K562 (cell line): ENCODE measurements at regions of chr6 and their contacts with region 1.

Region 1: GRCh38 chr6:20056350-20056992 is 155.8 kb downstream of the MBOAT1 start:
- DNase-seq: peak in 3 of 4 experiments; percentile 38 to 71 (median 58)
- ATAC-seq: peak; percentile 81
- H3K4me3 ChIP-seq: no peak overlapping the region
- H3K27ac ChIP-seq: no peak overlapping the region
- H3K4me1 ChIP-seq: no peaks in the 10 kb centered on the region
- H3K27me3 ChIP-seq: peaks cover 26 to 40% of the 10 kb centered on the region in 2 experiments
- CTCF ChIP-seq: peak; percentile 52 to 87 (median 67); a peak in 5 of 6 replicates
- EP300 ChIP-seq: no peak
- POLR2A ChIP-seq: no peak
- RAD21 ChIP-seq: peak; percentile 88 to 95

Region 2: DNA sequence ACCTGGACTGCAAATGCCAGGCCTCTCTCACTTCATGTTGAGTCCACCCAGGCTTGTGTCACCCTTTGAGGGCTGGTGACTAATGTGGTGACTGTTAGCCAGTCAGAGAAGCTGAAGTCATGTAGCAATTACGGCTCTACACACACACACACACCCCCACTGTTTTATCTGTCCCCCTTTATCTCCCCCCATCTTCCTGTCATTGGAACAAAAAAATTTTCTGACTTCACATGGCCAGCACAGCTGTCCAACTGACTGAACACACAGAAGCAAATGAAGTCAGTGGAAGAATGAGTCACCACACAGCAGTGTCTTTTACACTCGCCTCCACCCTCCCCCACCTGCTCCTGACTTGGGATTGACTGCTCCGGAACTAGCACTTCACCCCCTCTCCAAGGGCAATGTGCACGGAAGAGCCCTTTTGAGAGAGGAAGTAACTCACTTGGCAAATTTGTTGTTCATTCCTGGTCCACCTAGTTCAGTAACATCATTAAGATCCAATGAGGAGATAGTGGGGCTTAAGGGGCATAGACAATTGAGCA is 1471.4 kb before region 1 on chr6:
- CTCF ChIA-PET with region 1: no interaction called
- POLR2A ChIA-PET with region 1: no interaction called
- in situ Hi-C with region 1: loop called (anchors 10 kb)
- intact Hi-C with region 1: no loop called
- DNase-seq: peak; percentile 24 to 74 (median 34)
- ATAC-seq: peak; percentile 90
- H3K4me3 ChIP-seq: no peak overlapping the region
- H3K27ac ChIP-seq: peak overlapping the region; percentile 70; the same call in 2 of the 3 replicates
- H3K4me1 ChIP-seq: peaks cover 0 to 7% of the 10 kb centered on the region in 2 experiments; a peak in 2 of 5 replicates
- H3K27me3 ChIP-seq: no peaks in the 10 kb centered on the region
- CTCF ChIP-seq: no peak
- EP300 ChIP-seq: no peak
- POLR2A ChIP-seq: no peak
- RAD21 ChIP-seq: peak in 1 of 2 experiments; percentile 8; a peak in 1 of 4 replicates

Region 3: DNA sequence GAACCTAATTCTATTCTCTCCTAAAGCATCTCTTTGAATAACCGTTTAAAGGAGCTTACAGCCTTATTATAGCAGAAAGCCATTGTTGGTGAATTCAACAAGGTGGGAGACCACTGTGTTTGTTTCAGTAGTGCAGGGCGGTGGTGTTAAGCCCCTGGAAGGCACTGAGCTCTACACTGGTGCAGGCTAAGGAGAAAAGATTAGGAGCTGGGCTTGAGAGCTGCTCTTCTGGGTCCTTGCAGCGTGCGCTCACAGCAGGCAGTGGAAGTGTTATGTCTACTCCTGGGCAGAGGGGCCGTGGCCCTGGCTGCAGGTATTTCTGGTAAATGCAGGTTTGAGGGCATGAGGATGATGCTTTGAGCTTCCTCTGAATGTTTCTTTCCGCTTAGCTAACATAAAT is 1308.2 kb before region 1 on chr6:
- CTCF ChIA-PET with region 1: no interaction called
- POLR2A ChIA-PET with region 1: no interaction called
- in situ Hi-C with region 1: no loop called
- intact Hi-C with region 1: loop called (anchors 5 kb)
- DNase-seq: no peak
- ATAC-seq: no peak
- H3K4me3 ChIP-seq: no peak overlapping the region
- H3K27ac ChIP-seq: no peak overlapping the region
- H3K4me1 ChIP-seq: no peaks in the 10 kb centered on the region
- H3K27me3 ChIP-seq: no peaks in the 10 kb centered on the region
- CTCF ChIP-seq: no peak
- EP300 ChIP-seq: no peak
- POLR2A ChIP-seq: no peak
- RAD21 ChIP-seq: no peak

Region 4: DNA sequence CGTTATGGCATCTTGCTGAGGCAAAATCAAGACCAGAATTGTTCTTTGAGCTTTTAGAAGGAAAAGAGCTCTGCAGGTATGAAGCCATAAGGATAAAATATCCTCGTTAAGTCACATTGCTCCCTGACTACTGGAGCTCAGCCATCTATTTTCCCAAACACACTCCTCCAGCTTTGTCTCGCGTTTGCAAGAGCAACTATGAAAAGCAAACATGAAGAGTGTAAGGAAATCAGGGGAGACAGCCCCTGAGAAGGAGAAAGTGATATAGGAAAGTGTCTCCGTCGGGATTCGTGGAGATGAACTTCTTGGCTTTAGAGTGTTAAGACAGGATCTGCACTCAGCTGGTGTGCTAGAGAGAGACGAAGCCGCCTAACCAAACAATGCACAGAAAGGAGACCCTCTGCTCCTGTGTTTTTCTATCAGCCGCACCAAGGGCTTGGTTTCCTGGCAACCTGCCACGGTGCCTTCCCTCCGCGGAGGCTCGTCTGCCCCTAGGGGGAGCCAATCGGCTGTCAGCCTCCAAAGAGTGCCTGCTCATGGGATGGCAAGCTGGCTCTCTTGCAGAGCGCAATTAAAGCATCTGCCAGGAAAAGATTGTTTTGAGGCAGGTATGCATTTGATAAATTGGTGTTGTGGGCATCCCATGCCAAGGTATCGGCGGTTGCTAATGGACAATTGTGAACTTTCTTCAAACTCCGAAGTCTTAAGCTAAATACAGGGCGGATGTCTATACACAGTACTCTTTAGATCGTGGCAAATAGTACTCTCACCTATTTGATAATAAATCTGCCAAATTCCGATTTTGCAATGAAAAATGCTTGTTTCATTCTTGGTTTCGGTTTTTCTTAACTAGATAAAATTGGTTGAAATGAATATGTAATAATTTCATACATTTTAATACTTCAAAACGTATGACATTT is 1066.2 kb before region 1 on chr6:
- CTCF ChIA-PET with region 1: no interaction called
- POLR2A ChIA-PET with region 1: no interaction called
- in situ Hi-C with region 1: loop called (anchors 10 kb)
- intact Hi-C with region 1: loop called (anchors 5 kb)
- DNase-seq: peak; percentile 51 to 66 (median 60)
- ATAC-seq: peak; percentile 80
- H3K4me3 ChIP-seq: no peak overlapping the region
- H3K27ac ChIP-seq: no peak overlapping the region
- H3K4me1 ChIP-seq: no peaks in the 10 kb centered on the region
- H3K27me3 ChIP-seq: no peaks in the 10 kb centered on the region
- CTCF ChIP-seq: peak; percentile 40 to 68 (median 46); a peak in 5 of 6 replicates
- EP300 ChIP-seq: no peak
- POLR2A ChIP-seq: no peak
- RAD21 ChIP-seq: peak; percentile 19 to 42; a peak in 3 of 4 replicates

Region 5: GRCh38 chr6:19603721-19604120 is 452.8 kb before region 1 on chr6:
- CTCF ChIA-PET with region 1: no interaction called
- POLR2A ChIA-PET with region 1: no interaction called
- in situ Hi-C with region 1: no loop called
- intact Hi-C with region 1: no loop called
- DNase-seq: no peak
- ATAC-seq: no peak
- H3K4me3 ChIP-seq: no peak overlapping the region
- H3K27ac ChIP-seq: no peak overlapping the region
- H3K4me1 ChIP-seq: no peaks in the 10 kb centered on the region
- H3K27me3 ChIP-seq: no peaks in the 10 kb centered on the region
- CTCF ChIP-seq: no peak
- EP300 ChIP-seq: no peak
- POLR2A ChIP-seq: no peak
- RAD21 ChIP-seq: no peak

Region 6: GRCh38 chr6:19851241-19852089 is 205.0 kb before region 1 on chr6:
- CTCF ChIA-PET with region 1: no interaction called
- POLR2A ChIA-PET with region 1: no interaction called
- in situ Hi-C with region 1: no loop called
- intact Hi-C with region 1: loop called (anchors 5 kb)
- DNase-seq: peak in 2 of 4 experiments; percentile 45 to 67
- ATAC-seq: peak; percentile 95
- H3K4me3 ChIP-seq: no peak overlapping the region
- H3K27ac ChIP-seq: no peak overlapping the region
- H3K4me1 ChIP-seq: no peaks in the 10 kb centered on the region; a peak in 1 of 5 replicates
- H3K27me3 ChIP-seq: peaks cover 7 to 16% of the 10 kb centered on the region in 2 experiments; a peak in 3 of 5 replicates
- CTCF ChIP-seq: peak; percentile 63 to 89 (median 79)
- EP300 ChIP-seq: no peak
- POLR2A ChIP-seq: no peak
- RAD21 ChIP-seq: peak; percentile 72 to 86

Region 7: DNA sequence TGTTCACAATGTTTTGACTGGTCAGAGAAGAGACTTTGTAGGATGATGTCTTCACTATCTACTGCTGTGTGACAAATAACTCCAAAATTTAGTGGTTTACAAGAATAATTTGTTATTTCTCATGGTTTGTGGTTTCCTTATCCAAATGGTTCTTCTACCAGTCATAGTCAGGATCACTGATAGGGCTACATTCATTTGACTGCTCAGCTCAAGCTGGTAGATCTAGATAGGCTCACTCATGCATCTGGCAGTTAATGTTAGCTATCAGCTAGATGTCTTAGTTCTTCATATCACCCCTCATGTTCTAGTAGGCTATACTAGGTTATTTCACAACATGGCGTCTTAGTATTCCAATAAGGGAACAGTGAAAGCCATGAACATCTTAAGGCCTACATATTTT is 88.3 kb before region 1 on chr6:
- CTCF ChIA-PET with region 1: no interaction called
- POLR2A ChIA-PET with region 1: no interaction called
- in situ Hi-C with region 1: no loop called
- intact Hi-C with region 1: no loop called
- DNase-seq: peak; percentile 40 to 56 (median 50)
- ATAC-seq: peak; percentile 68
- H3K4me3 ChIP-seq: no peak overlapping the region
- H3K27ac ChIP-seq: no peak overlapping the region; the same call in 2 of the 3 replicates
- H3K4me1 ChIP-seq: peaks cover 0 to 14% of the 10 kb centered on the region in 2 experiments; a peak in 2 of 5 replicates
- H3K27me3 ChIP-seq: peaks cover 0 to under 1% of the 10 kb centered on the region in 2 experiments; a peak in 1 of 5 replicates
- CTCF ChIP-seq: no peak
- EP300 ChIP-seq: peak; percentile 68
- POLR2A ChIP-seq: no peak
- RAD21 ChIP-seq: no peak